CD8-positive, alpha-beta T cell (primary cell): ENCODE measurements at regions of chr19 and their contacts with region 1.

Region 1: GRCh38 chr19:53424968-53425597 is 6.7 kb upstream of the ZNF761 start:
- DNase-seq: peak; percentile 22 to 83 (median 70)
- ATAC-seq: peak; percentile 98
- H3K4me3 ChIP-seq: no peak overlapping the region
- H3K4me3 Mint-ChIP-seq: no peak overlapping the region
- H3K27ac ChIP-seq: no peak overlapping the region
- H3K27ac Mint-ChIP-seq: no peak overlapping the region
- H3K4me1 ChIP-seq: no peaks in the 10 kb centered on the region
- H3K4me1 Mint-ChIP-seq: peaks cover 2% of the 10 kb centered on the region
- H3K27me3 ChIP-seq: no peaks in the 10 kb centered on the region
- H3K27me3 Mint-ChIP-seq: peaks cover 2% of the 10 kb centered on the region
- CTCF ChIP-seq: peak; percentile 81

Region 2: GRCh38 chr19:53511933-53512374 is 86.9 kb after region 1 on chr19:
- CTCF ChIA-PET with region 1: interaction called, 12 read pairs
- POLR2A ChIA-PET with region 1: no interaction called
- intact Hi-C with region 1: loop called in 1 of 2 experiments (anchors 1 kb)
- DNase-seq: peak in 8 of 9 experiments; percentile 30 to 70 (median 58)
- ATAC-seq: peak; percentile 75
- H3K4me3 ChIP-seq: no peak overlapping the region
- H3K4me3 Mint-ChIP-seq: no peak overlapping the region
- H3K27ac ChIP-seq: no peak overlapping the region
- H3K27ac Mint-ChIP-seq: no peak overlapping the region
- H3K4me1 ChIP-seq: no peaks in the 10 kb centered on the region
- H3K4me1 Mint-ChIP-seq: peaks cover 2% of the 10 kb centered on the region
- H3K27me3 ChIP-seq: peaks cover 0 to 3% of the 10 kb centered on the region in 2 experiments
- H3K27me3 Mint-ChIP-seq: peaks cover 10% of the 10 kb centered on the region
- CTCF ChIP-seq: peak; percentile 60